Dendritic cell treated with granulocyte-macrophage colony-stimulating factor and Interleukin-4, amounts not matched to agents 40 ng/mL and 50 ng/mL, for 4 days (primary cell): ENCODE measurements at regions of chr16 and their contacts with region 1.

Region 1: DNA sequence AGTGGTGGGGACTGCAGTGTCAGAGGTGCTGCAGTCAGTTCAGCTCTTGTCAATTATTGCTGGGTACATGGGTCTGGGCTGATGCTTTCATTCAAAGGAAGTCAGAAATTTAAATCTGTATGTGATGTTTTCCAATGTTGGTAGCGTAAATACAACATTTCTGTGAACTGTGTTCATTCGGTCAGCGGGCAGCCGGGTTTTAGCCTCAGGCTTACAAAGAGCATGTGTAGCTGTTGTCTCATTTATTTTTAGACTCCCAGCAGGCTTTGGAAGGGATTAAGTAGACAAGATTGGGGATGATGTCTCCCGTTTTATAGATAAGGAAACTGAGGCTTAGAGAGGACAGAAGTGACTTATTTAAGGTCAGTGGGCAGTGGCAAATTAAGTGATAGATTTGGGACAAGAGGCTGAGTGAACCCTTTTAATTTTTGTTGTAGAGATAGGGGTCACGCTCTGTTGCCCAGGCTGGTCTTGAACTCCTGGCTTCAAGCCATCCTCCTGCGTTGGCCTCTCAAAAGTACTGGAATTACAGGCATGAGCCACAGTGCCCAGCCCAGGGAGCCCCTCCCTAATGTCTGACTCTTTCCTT is 8.1 kb downstream of the AQP8 start:
- H3K4me3 Mint-ChIP-seq: no peak overlapping the region
- H3K27ac Mint-ChIP-seq: no peak overlapping the region
- H3K4me1 Mint-ChIP-seq: no peaks in the 10 kb centered on the region
- H3K27me3 Mint-ChIP-seq: no peaks in the 10 kb centered on the region

Region 2: DNA sequence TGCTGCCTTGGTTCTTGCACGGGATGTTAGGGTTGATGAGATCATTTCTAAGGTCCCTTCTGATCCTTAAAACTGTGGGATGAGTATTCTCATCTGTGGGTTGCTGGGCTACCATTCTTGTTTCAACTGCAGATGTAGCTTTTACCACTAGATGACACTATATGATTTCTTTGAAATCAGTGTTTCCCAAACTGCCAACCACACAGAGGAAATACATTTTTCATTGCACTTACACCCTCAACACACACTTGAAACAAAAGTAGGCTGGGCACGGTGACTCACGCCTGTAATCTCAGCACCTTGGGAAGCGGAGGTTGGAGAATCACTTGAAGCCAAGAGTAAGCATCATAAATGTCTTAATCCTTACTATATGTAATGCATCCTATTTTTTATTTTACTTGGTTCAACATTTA is 98.0 kb before region 1 on chr16:
- intact Hi-C with region 1: loop called (anchors 1 kb)
- H3K4me3 Mint-ChIP-seq: no peak overlapping the region
- H3K27ac Mint-ChIP-seq: no peak overlapping the region
- H3K4me1 Mint-ChIP-seq: peaks cover 32% of the 10 kb centered on the region
- H3K27me3 Mint-ChIP-seq: no peaks in the 10 kb centered on the region

Region 3: DNA sequence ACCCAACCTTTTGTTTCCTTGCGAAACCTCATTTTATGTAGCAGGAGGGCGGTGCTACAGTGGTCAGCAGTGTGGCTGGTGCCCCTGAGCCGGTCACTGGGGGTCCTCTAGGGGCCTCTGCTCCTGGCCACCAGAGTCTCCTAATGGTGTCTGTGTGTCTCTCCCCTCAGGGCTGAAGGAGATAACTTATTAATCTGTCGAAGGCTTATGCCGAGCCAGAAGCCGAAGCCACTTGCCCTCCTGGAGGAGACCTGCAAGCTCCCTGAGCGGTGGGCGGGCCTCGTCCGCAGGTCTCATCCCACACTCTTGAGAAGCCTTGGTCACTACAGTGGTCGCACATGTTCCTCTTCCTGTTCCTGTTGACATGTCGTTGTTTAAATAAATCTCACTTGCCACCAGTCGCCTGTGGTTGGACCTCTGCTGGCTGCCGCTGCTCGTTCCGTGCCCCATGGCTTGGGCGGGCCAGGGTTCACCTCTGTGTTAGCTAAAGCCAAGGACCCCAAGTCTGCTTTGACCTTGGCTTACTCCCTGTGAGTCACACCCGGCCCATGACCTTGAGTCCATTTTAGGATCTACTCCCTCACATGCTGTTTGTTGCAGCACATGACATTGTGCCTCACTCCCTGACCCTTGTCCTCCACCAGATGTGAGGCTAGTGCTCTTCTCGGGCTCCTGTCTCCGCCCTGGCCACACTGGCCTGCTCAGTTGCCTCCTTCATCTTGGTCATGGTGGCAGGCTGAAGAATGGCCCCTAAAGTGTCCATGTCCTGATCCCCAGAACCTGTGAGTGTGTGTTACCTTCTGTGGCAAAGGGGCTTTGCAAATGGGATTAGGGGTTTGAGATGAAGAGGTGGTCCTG is 46.8 kb before region 1 on chr16:
- intact Hi-C with region 1: no loop called
- H3K4me3 Mint-ChIP-seq: no peak overlapping the region
- H3K27ac Mint-ChIP-seq: no peak overlapping the region
- H3K4me1 Mint-ChIP-seq: no peaks in the 10 kb centered on the region
- H3K27me3 Mint-ChIP-seq: no peaks in the 10 kb centered on the region